ENCODE measurements at regions of chrX and their contacts with region 1.

Region 1: GRCh38 chrX:113384628-113385027 is 544.0 kb upstream of the AMOT start:
- DNase-seq: peak; percentile 83
- H3K4me3 ChIP-seq: no peak overlapping the region
- H3K27ac ChIP-seq: peak overlapping the region; percentile 7
- H3K4me1 ChIP-seq: peaks cover 7% of the 10 kb centered on the region
- H3K27me3 ChIP-seq: no peaks in the 10 kb centered on the region
- CTCF ChIP-seq: no peak
- POLR2A ChIP-seq: no peak

Region 2: DNA sequence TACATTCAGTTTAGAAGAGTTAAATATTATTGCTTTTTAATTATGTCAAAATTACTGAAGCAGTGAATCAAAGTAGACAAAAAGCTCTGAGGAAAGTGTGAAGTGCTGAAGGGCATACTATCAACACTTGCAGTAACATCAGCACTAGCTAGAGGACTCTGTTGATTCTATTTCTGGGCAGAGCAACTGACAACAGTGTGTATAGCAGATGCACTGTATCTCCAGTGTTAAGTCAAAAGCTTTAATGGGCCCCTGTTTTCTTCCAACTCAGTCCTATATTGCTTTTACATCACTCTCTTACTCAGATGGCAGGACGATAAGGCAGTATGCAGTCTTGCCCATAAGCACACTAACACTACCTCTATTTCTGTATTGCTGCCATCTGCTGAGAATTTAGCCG is 108.8 kb before region 1 on chrX:
- CTCF ChIA-PET with region 1: no interaction called
- POLR2A ChIA-PET with region 1: no interaction called
- dilution Hi-C with region 1: no loop called
- intact Hi-C with region 1: no loop called
- DNase-seq: no peak
- H3K4me3 ChIP-seq: no peak overlapping the region
- H3K27ac ChIP-seq: no peak overlapping the region
- H3K4me1 ChIP-seq: no peaks in the 10 kb centered on the region
- H3K27me3 ChIP-seq: no peaks in the 10 kb centered on the region
- CTCF ChIP-seq: no peak
- POLR2A ChIP-seq: no peak

Region 3: GRCh38 chrX:113297437-113297836 is 87.2 kb before region 1 on chrX:
- CTCF ChIA-PET with region 1: no interaction called
- POLR2A ChIA-PET with region 1: no interaction called
- dilution Hi-C with region 1: no loop called
- intact Hi-C with region 1: loop called (anchors 10 kb)
- DNase-seq: no peak
- H3K4me3 ChIP-seq: no peak overlapping the region
- H3K27ac ChIP-seq: no peak overlapping the region
- H3K4me1 ChIP-seq: no peaks in the 10 kb centered on the region
- H3K27me3 ChIP-seq: no peaks in the 10 kb centered on the region
- CTCF ChIP-seq: no peak
- POLR2A ChIP-seq: no peak

Measured in endothelial cell of umbilical vein (primary cell).